MCF 10A (cell line): ENCODE measurements at regions of chr3 and their contacts with region 1.

Region 1: DNA sequence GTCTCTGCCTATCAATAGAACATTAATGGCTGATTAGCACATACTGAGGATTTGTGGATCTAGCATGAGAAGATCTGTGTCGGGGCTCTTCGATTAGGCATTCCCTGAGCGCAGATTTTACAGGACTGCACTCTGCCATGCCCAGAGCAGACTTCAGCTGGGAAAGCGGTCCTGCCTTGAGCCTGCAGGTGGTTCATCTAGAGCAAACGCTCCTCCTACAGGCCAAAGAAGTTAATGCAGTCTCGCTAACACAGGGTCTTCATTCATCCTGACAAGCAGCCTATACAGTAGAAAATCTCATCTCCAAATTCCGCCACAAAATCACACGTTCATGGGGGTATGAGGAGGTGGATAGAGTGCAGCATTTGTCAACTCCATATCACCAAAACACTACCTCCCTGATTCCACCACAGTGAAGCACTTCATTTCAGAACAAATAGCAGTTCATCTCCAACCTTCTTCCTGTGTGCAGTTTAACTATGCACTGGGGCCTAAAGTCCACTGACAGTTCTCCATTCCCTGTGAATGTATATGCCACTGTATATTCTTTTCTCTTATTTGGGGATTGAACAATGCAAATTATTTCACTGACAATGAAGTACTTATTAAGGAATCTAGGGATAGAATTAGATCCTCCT is 405.8 kb downstream of the IGSF11 start:
- DNase-seq: peak; percentile 79
- H3K4me3 Mint-ChIP-seq: no peak overlapping the region
- H3K27ac Mint-ChIP-seq: no peak overlapping the region
- H3K4me1 Mint-ChIP-seq: no peaks in the 10 kb centered on the region
- H3K27me3 Mint-ChIP-seq: no peaks in the 10 kb centered on the region
- CTCF ChIP-seq: peak; percentile 92

Region 2: GRCh38 chr3:117059067-117059955 is 1569.5 kb before region 1 on chr3:
- CTCF ChIA-PET with region 1: interaction called, 10 read pairs
- POLR2A ChIA-PET with region 1: no interaction called
- intact Hi-C with region 1: loop called (anchors 1 kb)
- DNase-seq: peak; percentile 19
- H3K4me3 Mint-ChIP-seq: no peak overlapping the region
- H3K27ac Mint-ChIP-seq: no peak overlapping the region
- H3K4me1 Mint-ChIP-seq: no peaks in the 10 kb centered on the region
- H3K27me3 Mint-ChIP-seq: peaks cover 44% of the 10 kb centered on the region
- CTCF ChIP-seq: peak; percentile 44

Region 3: DNA sequence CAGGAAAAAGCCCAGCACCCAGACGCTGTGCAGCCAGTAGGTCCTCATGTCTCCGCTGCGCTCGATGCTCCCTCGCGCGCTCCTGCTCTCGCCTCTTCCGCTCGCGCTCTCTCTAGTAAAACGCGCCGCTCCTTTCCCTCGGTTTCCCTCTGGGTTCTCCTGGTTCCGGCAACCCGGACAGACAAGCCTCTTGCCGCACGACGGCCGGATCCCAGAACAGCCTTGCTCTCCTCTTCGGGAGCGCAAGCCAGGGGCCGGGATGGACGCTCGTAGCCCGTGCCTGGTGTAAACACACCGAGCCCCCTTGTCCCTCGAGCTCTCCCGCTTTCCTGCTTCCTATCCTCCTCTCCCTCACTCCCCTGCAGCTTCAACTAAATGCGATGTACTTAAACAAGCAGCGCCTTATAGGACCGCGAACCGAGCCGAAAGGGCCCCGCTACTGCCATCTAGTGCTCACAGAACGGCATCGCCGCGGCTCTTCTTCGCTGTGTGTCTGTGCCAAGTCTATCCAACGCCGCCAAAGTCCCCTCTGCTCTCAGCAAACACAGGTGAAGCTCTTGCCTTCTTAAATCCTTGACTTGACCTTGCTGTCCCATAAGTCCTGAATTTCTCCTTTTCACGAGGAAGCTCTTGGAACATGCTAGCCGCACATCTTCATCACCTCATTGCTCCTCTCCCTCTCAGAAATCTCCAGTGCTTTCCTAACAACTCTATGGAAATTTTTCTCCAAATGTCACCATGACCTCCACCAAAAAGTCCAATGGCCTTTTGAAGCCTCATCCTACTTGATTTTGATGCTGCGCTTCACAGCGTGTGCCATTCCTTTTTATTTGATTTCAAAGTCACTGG is 631.4 kb before region 1 on chr3:
- CTCF ChIA-PET with region 1: interaction called, 3 read pairs
- POLR2A ChIA-PET with region 1: no interaction called
- intact Hi-C with region 1: loop called (anchors 2 kb)
- DNase-seq: peak; percentile 77
- H3K4me3 Mint-ChIP-seq: no peak overlapping the region
- H3K27ac Mint-ChIP-seq: no peak overlapping the region
- H3K4me1 Mint-ChIP-seq: no peaks in the 10 kb centered on the region
- H3K27me3 Mint-ChIP-seq: no peaks in the 10 kb centered on the region
- CTCF ChIP-seq: peak; percentile 77

Region 4: GRCh38 chr3:118269537-118270125 is 359.2 kb before region 1 on chr3:
- CTCF ChIA-PET with region 1: no interaction called
- POLR2A ChIA-PET with region 1: no interaction called
- intact Hi-C with region 1: loop called (anchors 10 kb)
- DNase-seq: no peak
- H3K4me3 Mint-ChIP-seq: no peak overlapping the region
- H3K27ac Mint-ChIP-seq: no peak overlapping the region
- H3K4me1 Mint-ChIP-seq: peaks cover 5% of the 10 kb centered on the region
- H3K27me3 Mint-ChIP-seq: no peaks in the 10 kb centered on the region
- CTCF ChIP-seq: no peak

Region 5: DNA sequence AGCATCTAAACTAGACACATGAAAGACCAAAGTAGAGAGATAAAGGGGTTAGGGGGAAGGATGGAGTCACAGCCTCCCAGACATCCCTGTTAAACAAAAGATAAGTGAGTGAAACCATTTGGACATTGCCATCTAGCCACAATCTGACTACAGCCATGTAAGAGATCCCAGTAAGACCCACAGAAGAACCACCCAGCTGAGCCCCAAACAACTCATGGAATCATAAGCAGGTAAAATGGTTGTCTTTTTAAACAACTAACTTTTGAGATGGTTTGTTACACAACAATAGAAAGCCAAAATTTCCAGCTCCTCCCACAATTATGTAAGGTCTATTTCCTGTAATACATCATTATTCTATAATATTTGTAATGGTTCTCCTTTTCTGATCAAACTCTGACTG is 31.6 kb before region 1 on chr3:
- CTCF ChIA-PET with region 1: no interaction called
- POLR2A ChIA-PET with region 1: no interaction called
- intact Hi-C with region 1: no loop called
- DNase-seq: no peak
- H3K4me3 Mint-ChIP-seq: no peak overlapping the region
- H3K27ac Mint-ChIP-seq: no peak overlapping the region
- H3K4me1 Mint-ChIP-seq: no peaks in the 10 kb centered on the region
- H3K27me3 Mint-ChIP-seq: no peaks in the 10 kb centered on the region
- CTCF ChIP-seq: no peak

Region 6: DNA sequence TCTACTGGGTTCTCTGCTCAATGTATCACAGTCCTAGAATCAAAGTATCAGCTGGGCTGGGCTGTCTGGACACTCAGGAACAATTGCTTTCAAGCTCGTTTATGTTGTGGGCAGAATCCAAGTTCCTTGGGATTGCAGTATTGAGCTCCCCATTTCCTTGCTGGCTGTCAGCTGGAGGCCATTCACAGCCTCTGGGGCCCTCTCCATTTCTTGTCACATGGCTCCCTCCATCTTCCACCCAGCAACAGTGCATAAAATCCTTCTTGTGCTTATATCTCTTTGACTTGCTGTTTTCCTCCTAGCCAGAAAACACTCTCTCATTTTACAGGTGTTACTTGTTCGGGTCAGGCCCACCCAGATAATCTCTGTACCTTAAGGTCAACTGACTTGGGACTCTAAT is 42.4 kb after region 1 on chr3:
- CTCF ChIA-PET with region 1: no interaction called
- POLR2A ChIA-PET with region 1: no interaction called
- intact Hi-C with region 1: no loop called
- DNase-seq: no peak
- H3K4me3 Mint-ChIP-seq: no peak overlapping the region
- H3K27ac Mint-ChIP-seq: no peak overlapping the region
- H3K4me1 Mint-ChIP-seq: no peaks in the 10 kb centered on the region
- H3K27me3 Mint-ChIP-seq: no peaks in the 10 kb centered on the region
- CTCF ChIP-seq: no peak

Region 7: GRCh38 chr3:118817748-118818165 is 188.9 kb after region 1 on chr3:
- CTCF ChIA-PET with region 1: interaction called, 3 read pairs
- POLR2A ChIA-PET with region 1: no interaction called
- intact Hi-C with region 1: loop called (anchors 2 kb)
- DNase-seq: peak; percentile 76
- H3K4me3 Mint-ChIP-seq: no peak overlapping the region
- H3K27ac Mint-ChIP-seq: peak overlapping the region; percentile 36
- H3K4me1 Mint-ChIP-seq: peaks cover 17% of the 10 kb centered on the region
- H3K27me3 Mint-ChIP-seq: no peaks in the 10 kb centered on the region
- CTCF ChIP-seq: peak; percentile 70

Region 8: DNA sequence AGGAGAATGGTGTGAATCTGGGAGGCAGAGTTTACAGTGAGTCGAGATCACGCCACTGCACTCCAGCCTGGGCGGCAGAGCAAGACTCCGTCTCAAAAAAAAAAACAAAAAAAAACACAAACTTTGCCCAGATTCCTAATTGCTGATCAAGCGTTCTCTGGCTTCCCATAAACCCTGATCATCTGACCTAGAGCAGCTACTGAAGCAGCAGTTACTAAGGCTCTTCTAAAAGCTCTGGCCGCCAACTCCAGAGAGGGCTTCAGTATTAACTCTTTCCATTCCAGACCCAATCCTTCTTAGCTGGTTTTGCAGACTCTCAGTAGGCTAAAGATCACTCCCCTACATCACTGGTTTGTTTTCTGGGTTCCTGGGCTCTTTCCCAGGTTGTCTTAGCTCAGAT is 204.3 kb after region 1 on chr3:
- CTCF ChIA-PET with region 1: no interaction called
- POLR2A ChIA-PET with region 1: no interaction called
- intact Hi-C with region 1: no loop called
- DNase-seq: no peak
- H3K4me3 Mint-ChIP-seq: no peak overlapping the region
- H3K27ac Mint-ChIP-seq: no peak overlapping the region
- H3K4me1 Mint-ChIP-seq: no peaks in the 10 kb centered on the region
- H3K27me3 Mint-ChIP-seq: no peaks in the 10 kb centered on the region
- CTCF ChIP-seq: no peak